ENCODE measurements at regions of chr21 and their contacts with region 1.

Region 1: DNA sequence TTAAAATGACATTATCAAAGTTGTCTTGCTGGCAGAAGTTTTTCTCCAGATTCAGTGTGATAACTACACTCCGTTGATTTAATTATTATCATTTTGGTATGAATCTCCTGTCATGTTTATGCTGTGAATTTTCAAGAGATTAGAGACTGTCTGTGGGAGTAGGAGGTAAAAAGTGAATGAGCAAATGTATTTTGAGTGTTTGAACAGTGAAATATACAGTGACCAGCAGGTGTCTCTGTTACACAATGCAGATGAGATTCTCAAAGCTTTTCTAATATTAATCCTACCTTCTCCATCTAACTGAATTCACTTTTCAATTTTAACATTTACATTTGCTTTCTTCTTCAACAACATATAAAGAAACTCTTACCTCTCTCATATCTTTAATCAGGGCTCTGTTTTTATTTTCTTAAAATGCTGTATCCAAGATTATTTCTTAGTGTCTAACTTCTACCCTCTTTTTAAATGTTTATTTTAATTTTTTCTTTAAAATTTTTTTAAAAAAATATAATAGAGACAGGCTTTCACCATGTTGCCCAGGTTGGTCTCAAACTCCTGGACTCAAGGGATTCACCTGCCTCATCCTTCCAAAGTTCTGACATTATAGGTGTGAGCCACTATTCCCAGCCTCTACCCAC is 20.9 kb upstream of the HSPA13 start:
- DNase-seq: no peak
- H3K4me3 ChIP-seq: no peak overlapping the region
- H3K27ac ChIP-seq: no peak overlapping the region
- H3K4me1 ChIP-seq: no peaks in the 10 kb centered on the region
- H3K27me3 ChIP-seq: no peaks in the 10 kb centered on the region
- CTCF ChIP-seq: peak; percentile 77

Region 2: GRCh38 chr21:14737922-14738321 is 334.1 kb after region 1 on chr21:
- CTCF ChIA-PET with region 1: no interaction called
- POLR2A ChIA-PET with region 1: no interaction called
- intact Hi-C with region 1: loop called (anchors 5 kb)
- DNase-seq: peak; percentile 6 to 37
- H3K4me3 ChIP-seq: no peak overlapping the region
- H3K27ac ChIP-seq: no peak overlapping the region
- H3K4me1 ChIP-seq: peaks cover 7% of the 10 kb centered on the region; the same call in 1 of the 2 replicates
- H3K27me3 ChIP-seq: no peaks in the 10 kb centered on the region
- CTCF ChIP-seq: peak; percentile 63

Region 3: DNA sequence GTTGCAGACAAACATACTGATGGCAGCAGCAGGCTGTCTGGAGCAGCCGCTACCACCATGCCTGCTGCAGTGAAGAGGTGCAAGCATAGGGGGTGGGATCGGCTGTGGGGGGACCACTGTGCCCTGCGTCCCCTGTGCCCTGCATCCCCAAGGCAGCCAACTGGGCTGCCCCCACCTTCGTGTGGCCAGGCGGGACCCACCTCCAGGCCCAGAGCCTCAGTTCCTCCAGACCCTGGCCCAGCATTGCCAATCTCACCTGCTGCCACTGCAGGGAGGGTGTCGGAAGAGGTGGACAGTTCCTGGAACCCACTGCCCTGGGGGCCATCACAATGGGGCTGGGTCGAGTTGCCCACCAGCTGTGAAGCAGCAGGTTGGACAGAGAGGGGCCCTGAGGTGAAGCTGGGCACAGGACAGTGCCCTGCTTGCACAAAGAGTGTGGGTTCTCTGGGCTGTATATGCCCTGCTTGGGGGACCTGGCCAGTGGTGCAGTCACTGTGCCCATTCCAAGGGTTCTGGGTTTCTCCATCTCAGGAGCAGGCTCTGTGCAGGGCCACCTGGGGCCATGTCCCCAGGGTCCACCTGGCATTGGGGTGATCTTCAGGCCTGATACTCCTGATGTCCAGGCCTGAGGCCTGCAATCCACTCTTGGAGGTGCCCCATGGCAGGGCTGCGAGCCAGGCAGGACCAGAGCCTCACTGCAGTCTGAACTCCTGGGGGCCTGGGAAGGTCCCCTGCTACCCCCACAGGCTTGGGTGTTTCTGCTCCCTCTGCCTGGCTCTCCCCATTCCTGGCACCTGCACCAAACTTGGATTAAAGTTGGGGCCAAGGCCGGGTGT is 922.5 kb after region 1 on chr21:
- CTCF ChIA-PET with region 1: no interaction called
- POLR2A ChIA-PET with region 1: no interaction called
- intact Hi-C with region 1: no loop called
- DNase-seq: no peak
- H3K4me3 ChIP-seq: no peak overlapping the region
- H3K27ac ChIP-seq: no peak overlapping the region
- H3K4me1 ChIP-seq: no peaks in the 10 kb centered on the region
- H3K27me3 ChIP-seq: no peaks in the 10 kb centered on the region
- CTCF ChIP-seq: no peak

Region 4: GRCh38 chr21:15552914-15553494 is 1149.2 kb after region 1 on chr21:
- CTCF ChIA-PET with region 1: no interaction called
- POLR2A ChIA-PET with region 1: no interaction called
- intact Hi-C with region 1: loop called (anchors 10 kb)
- DNase-seq: peak in 1 of 2 experiments; percentile 37
- H3K4me3 ChIP-seq: no peak overlapping the region
- H3K27ac ChIP-seq: no peak overlapping the region
- H3K4me1 ChIP-seq: no peaks in the 10 kb centered on the region
- H3K27me3 ChIP-seq: no peaks in the 10 kb centered on the region
- CTCF ChIP-seq: peak; percentile 66

Measured in PC-9 (cell line).